Prostate gland (tissue), 2 donors: ENCODE measurements at regions of chr17 and their contacts with region 1.

Region 1: DNA sequence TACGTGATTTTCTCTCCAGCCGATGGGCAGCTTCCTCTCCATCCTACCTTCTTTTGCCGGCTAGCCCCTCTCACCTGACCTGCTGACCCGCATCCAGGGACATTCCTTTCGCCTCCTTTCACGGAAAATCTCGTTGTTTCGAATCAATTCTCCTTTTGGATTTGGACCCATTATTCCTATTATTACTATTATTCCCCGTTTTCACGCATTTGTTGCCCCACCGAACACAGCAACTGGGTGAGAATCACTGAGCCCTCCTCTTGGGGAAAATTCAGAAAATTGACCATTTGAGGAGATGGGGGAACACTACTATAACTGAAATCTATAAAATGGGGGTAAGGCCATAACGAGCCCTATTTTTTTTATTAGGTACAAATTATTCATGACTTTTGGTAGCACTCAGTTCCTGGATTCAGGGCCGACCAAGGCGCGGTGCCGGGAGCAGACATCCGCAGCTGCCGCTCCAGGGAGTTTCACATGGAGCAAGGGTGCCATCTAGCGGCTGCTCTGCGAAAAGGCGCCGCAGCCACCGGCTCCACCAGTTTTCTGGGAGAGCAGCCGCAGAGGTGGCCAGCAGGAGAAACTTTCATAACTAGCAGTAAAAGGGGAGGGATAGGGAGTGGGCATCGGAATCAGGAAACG is 3.3 kb upstream of the HOXB8 start:
- DNase-seq: peak; percentile 87
- H3K4me3 ChIP-seq: peak overlapping the region in 1 of 2 donors; percentile 16
- H3K27ac ChIP-seq: no peak overlapping the region
- H3K4me1 ChIP-seq: peaks cover 8% of the 10 kb centered on the region
- H3K27me3 ChIP-seq: peaks cover 68% of the 10 kb centered on the region
- CTCF ChIP-seq: peak; percentile 91 to 99 (median 96)
- POLR2A ChIP-seq: no peak

Region 2: GRCh38 chr17:48335858-48336500 is 282.4 kb before region 1 on chr17:
- intact Hi-C with region 1: loop called (anchors 5 kb)
- DNase-seq: no peak
- H3K4me3 ChIP-seq: no peak overlapping the region
- H3K27ac ChIP-seq: no peak overlapping the region
- H3K4me1 ChIP-seq: no peaks in the 10 kb centered on the region
- H3K27me3 ChIP-seq: peaks cover 2% of the 10 kb centered on the region
- CTCF ChIP-seq: peak in 3 of 4 experiments; percentile 71 to 79 (median 72)
- POLR2A ChIP-seq: no peak